SK-N-SH (cell line): ENCODE measurements at regions of chr7 and their contacts with region 1.

Region 1: GRCh38 chr7:26853788-26854393 is 10.5 kb downstream of the SKAP2 start:
- DNase-seq: peak; percentile 20
- H3K4me3 ChIP-seq: no peak overlapping the region
- H3K27ac ChIP-seq: no peak overlapping the region
- H3K4me1 ChIP-seq: peaks cover 0 to 3% of the 10 kb centered on the region in 2 experiments; a peak in 2 of 4 replicates
- H3K27me3 ChIP-seq: peaks cover 51% of the 10 kb centered on the region; the same call in 1 of the 2 replicates
- CTCF ChIP-seq: peak; percentile 84
- EP300 ChIP-seq: no peak
- RAD21 ChIP-seq: peak; percentile 62

Region 2: DNA sequence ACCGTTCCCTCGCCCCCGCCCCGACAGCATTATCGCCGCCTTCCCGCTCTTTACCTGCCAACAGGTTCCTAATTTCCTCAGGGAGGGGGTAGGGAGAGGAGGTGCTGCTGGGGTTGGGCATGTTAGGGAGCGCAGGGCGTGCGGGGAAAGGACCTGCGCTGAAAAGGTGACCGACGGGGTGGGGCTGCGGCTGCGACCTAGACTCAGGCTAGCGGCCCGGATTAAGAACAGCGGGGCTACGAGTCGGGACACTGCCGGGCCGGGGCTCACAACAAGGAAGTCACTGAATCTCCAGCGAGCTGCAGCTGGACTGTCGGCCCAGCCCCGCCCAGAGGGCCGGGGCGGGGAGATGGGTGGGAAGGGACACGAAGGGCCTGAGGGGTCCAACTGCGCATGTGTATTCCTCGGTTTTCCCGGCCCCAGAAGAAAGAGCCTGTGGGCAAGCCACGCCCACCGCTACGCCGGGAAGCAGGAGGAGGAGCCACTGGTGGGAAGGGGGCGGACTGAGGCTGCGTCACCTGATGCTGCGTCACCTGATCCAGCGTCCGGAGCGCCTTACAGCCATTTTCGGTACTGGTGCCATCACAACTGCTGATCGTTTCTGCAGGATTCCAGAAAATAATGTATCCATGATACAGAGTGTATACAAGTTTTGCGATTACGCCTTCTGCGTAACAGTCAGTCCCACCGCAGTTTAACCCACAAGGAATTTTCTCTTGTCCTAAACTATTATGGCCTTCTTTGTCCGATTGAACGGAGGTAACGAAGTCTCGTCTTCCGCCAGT is 10.6 kb after region 1 on chr7 and contains the start of gene SKAP2:
- CTCF ChIA-PET with region 1: interaction called, 15 read pairs
- POLR2A ChIA-PET with region 1: no interaction called
- DNase-seq: peak; percentile 98
- H3K4me3 ChIP-seq: peak within 1 kb of the TSS; percentile 69 to 81
- H3K27ac ChIP-seq: peak within 1 kb of the TSS; percentile 42 to 64; a peak in 2 of 4 replicates
- H3K4me1 ChIP-seq: peaks cover 0 to 11% of the 10 kb centered on the region in 2 experiments; a peak in 2 of 4 replicates
- H3K27me3 ChIP-seq: peaks cover 8% of the 10 kb centered on the region; the same call in 1 of the 2 replicates
- CTCF ChIP-seq: no peak
- EP300 ChIP-seq: no peak
- RAD21 ChIP-seq: no peak
- polyA plus RNA-seq, gene SKAP2: 0.69 and 0.91 TPM in 2 replicates

Region 3: GRCh38 chr7:26880852-26881251 is 27.0 kb after region 1 on chr7:
- CTCF ChIA-PET with region 1: no interaction called
- POLR2A ChIA-PET with region 1: no interaction called
- DNase-seq: no peak
- H3K4me3 ChIP-seq: no peak overlapping the region
- H3K27ac ChIP-seq: no peak overlapping the region
- H3K4me1 ChIP-seq: no peaks in the 10 kb centered on the region
- H3K27me3 ChIP-seq: peaks cover 7% of the 10 kb centered on the region; the same call in 1 of the 2 replicates
- CTCF ChIP-seq: no peak
- EP300 ChIP-seq: no peak
- RAD21 ChIP-seq: no peak

Region 4: GRCh38 chr7:27025270-27025669 is 171.4 kb after region 1 on chr7:
- CTCF ChIA-PET with region 1: no interaction called
- POLR2A ChIA-PET with region 1: no interaction called
- DNase-seq: no peak
- H3K4me3 ChIP-seq: no peak overlapping the region
- H3K27ac ChIP-seq: no peak overlapping the region
- H3K4me1 ChIP-seq: no peaks in the 10 kb centered on the region
- H3K27me3 ChIP-seq: peaks cover 47% of the 10 kb centered on the region; the same call in 1 of the 2 replicates
- CTCF ChIP-seq: no peak
- EP300 ChIP-seq: no peak
- RAD21 ChIP-seq: no peak

Region 5: GRCh38 chr7:27143023-27143949 is 289.4 kb after region 1 on chr7 and contains the start of gene HOXA5:
- CTCF ChIA-PET with region 1: interaction called, 29 read pairs
- POLR2A ChIA-PET with region 1: no interaction called
- DNase-seq: peak; percentile 92
- H3K4me3 ChIP-seq: peak within 1 kb of the TSS; percentile 17 to 31; a peak in 2 of 4 replicates
- H3K27ac ChIP-seq: no peak within 1 kb of the TSS
- H3K4me1 ChIP-seq: peaks cover 11 to 12% of the 10 kb centered on the region in 2 experiments; a peak in 1 of 4 replicates
- H3K27me3 ChIP-seq: peaks cover 100% of the 10 kb centered on the region
- CTCF ChIP-seq: peak; percentile 85
- EP300 ChIP-seq: no peak
- RAD21 ChIP-seq: peak; percentile 63
- polyA plus RNA-seq, gene HOXA5: not detected in 2 replicates

Region 6: DNA sequence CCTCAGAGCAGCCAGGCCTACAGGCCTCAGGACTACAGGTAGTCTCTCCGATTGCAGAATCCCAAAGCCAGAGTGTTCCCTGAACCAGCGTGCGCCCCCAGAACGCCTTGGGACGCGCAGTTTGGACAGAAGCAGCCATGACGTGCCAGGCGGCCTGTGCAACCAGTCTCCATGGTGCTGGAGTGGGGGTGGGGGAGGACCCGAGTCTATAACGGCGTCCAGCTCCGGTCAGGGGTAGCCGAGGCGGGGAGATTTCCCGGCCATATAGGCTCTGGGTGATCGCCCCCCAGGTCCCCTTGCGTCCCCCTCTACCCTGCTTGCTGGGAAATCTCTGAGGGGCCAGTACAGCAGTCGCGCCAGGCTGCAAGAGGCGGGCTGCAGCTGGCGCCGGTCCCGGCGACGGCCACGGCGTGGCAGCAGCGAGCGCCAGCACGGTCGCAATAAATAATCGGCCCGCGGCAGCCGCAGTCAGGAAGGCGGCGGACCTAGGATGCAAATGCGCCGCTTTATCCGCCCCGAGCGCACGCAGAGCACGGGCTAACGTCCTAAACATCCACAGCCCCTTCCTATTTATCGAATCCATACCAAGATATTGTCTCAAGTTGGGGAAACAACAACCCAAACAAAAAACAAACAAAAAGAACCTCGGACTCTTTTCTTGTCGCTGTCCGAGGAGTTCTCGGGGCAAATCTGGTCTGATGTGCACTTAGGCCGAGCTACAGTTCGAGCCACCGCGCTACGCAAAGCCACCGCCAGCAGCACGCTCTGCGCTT is 296.9 kb after region 1 on chr7:
- CTCF ChIA-PET with region 1: interaction called, 29 read pairs
- POLR2A ChIA-PET with region 1: no interaction called
- DNase-seq: peak; percentile 96
- H3K4me3 ChIP-seq: peak overlapping the region; percentile 32 to 63
- H3K27ac ChIP-seq: no peak overlapping the region
- H3K4me1 ChIP-seq: peaks cover 0 to 9% of the 10 kb centered on the region in 2 experiments; a peak in 1 of 4 replicates
- H3K27me3 ChIP-seq: peaks cover 100% of the 10 kb centered on the region
- CTCF ChIP-seq: peak; percentile 91
- EP300 ChIP-seq: peak in 1 of 2 experiments; percentile 40; a peak in 1 of 4 replicates
- RAD21 ChIP-seq: peak; percentile 51

Region 7: GRCh38 chr7:27160546-27161213 is 306.8 kb after region 1 on chr7:
- CTCF ChIA-PET with region 1: interaction called, 31 read pairs
- POLR2A ChIA-PET with region 1: no interaction called
- DNase-seq: peak; percentile 96
- H3K4me3 ChIP-seq: peak overlapping the region; percentile 39 to 70
- H3K27ac ChIP-seq: no peak overlapping the region
- H3K4me1 ChIP-seq: peaks cover 0 to 8% of the 10 kb centered on the region in 2 experiments; a peak in 1 of 4 replicates
- H3K27me3 ChIP-seq: peaks cover 91% of the 10 kb centered on the region
- CTCF ChIP-seq: peak; percentile 99
- EP300 ChIP-seq: no peak
- RAD21 ChIP-seq: peak; percentile 94